OCI-LY7 (cell line): ENCODE measurements at regions of chr7 and their contacts with region 1.

Region 1: GRCh38 chr7:102272075-102272917 is 14.4 kb upstream of the SH2B2 start:
- DNase-seq: peak; percentile 80
- H3K4me3 ChIP-seq: no peak overlapping the region
- H3K27ac ChIP-seq: no peak overlapping the region
- H3K4me1 ChIP-seq: peaks cover 17% of the 10 kb centered on the region
- CTCF ChIP-seq: peak; percentile 97

Region 2: GRCh38 chr7:101602484-101603241 is 669.6 kb before region 1 on chr7:
- CTCF ChIA-PET with region 1: no interaction called
- POLR2A ChIA-PET with region 1: no interaction called
- intact Hi-C with region 1: loop called (anchors 1 kb)
- DNase-seq: peak; percentile 85
- H3K4me3 ChIP-seq: no peak overlapping the region
- H3K27ac ChIP-seq: no peak overlapping the region
- H3K4me1 ChIP-seq: peaks cover 10% of the 10 kb centered on the region
- CTCF ChIP-seq: peak; percentile 98